Heart left ventricle (tissue), 16 donors: ENCODE measurements at regions of chr9 and their contacts with region 1.

Region 1: DNA sequence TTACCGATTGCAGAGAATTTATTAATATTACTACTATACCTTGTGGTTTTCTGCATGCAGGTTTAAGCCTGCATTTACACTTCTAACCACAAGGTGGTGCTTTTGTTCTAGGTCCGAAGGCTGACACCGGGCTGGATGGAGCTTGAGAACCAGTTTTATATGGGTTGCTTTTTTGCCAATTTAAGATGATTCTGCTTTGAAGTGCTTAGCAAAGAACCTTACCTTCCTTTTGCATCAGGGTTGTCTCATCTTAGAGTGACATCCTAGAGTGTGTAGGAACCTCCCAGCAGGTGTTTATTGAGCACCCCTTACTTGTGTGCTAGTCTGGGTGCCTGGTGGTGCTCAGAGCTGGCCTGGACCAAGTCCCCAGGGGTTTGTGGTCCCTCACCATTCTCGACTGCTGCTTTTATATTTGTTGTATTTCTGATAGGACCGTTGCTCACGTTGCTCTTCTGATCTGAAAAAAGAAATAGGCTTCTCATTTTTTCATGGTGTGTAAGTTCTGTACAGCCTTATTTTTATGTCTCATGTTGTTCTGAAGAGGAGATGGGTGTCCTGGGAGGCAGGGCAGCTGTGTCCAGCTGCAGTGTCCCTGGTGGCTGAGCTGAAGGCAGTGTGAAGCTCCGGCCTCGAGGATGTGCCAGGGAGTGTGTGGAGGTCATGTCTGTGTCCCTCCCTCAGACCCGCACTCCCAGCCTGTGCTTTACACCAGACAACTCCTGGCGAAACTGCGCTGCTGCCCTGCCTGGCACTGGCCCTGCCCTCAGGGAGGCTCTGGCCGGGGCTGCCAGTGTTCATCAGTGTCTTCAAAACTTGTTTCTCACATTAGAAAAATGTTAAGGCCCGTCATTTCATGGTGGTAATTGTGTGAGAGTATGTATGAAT is 54.3 kb downstream of the EHMT1 start:
- DNase-seq: peak in 3 of 5 donors; percentile 40 to 65 (median 47)
- ATAC-seq: peak; percentile 20 to 57 (median 44)
- H3K4me3 ChIP-seq: no peak overlapping the region
- H3K27ac ChIP-seq: peak overlapping the region in 5 of 12 donors; percentile 0 to 33 (median 5)
- H3K4me1 ChIP-seq: peaks cover 0 to 49% (median 32%) of the 10 kb centered on the region in 12 donors
- H3K27me3 ChIP-seq: no peaks in the 10 kb centered on the region
- CTCF ChIP-seq: peak; percentile 76 to 93 (median 88)
- POLR2A ChIP-seq: no peak

Region 2: GRCh38 chr9:137618105-137619067 is 54.8 kb before region 1 on chr9 and contains the start of gene EHMT1:
- intact Hi-C with region 1: loop called in 1 of 10 experiments (anchors 10 kb)
- DNase-seq: peak; percentile 83 to 95 (median 89)
- ATAC-seq: peak; percentile 65 to 86 (median 84)
- H3K4me3 ChIP-seq: peak within 1 kb of the TSS; percentile 77 to 100 (median 90)
- H3K27ac ChIP-seq: peak within 1 kb of the TSS; percentile 88 to 96 (median 92)
- H3K4me1 ChIP-seq: peaks cover 4 to 56% (median 39%) of the 10 kb centered on the region in 12 donors
- H3K27me3 ChIP-seq: no peaks in the 10 kb centered on the region
- CTCF ChIP-seq: peak in 1 of 12 donors; percentile 6
- POLR2A ChIP-seq: peak in 1 of 2 donors; percentile 58
- total RNA-seq, gene EHMT1: 27.8 to 55.9 (median 32.0) TPM

Region 3: GRCh38 chr9:137694967-137695879 is 22.1 kb after region 1 on chr9:
- intact Hi-C with region 1: loop called in 2 of 10 experiments (anchors 1 to 2 kb)
- DNase-seq: peak; percentile 45 to 71 (median 56)
- ATAC-seq: peak; percentile 68 to 89 (median 88)
- H3K4me3 ChIP-seq: no peak overlapping the region
- H3K27ac ChIP-seq: no peak overlapping the region
- H3K4me1 ChIP-seq: peaks cover 0 to 54% (median 36%) of the 10 kb centered on the region in 12 donors
- H3K27me3 ChIP-seq: no peaks in the 10 kb centered on the region
- CTCF ChIP-seq: peak; percentile 57 to 74 (median 67)
- POLR2A ChIP-seq: no peak

Region 4: GRCh38 chr9:137745541-137745991 is 72.4 kb after region 1 on chr9:
- intact Hi-C with region 1: loop called in 1 of 10 experiments (anchors 10 kb)
- DNase-seq: no peak
- ATAC-seq: no peak
- H3K4me3 ChIP-seq: no peak overlapping the region
- H3K27ac ChIP-seq: no peak overlapping the region
- H3K4me1 ChIP-seq: peaks cover 0 to 9% (median 2%) of the 10 kb centered on the region in 12 donors
- H3K27me3 ChIP-seq: no peaks in the 10 kb centered on the region
- CTCF ChIP-seq: no peak
- POLR2A ChIP-seq: no peak

Region 5: GRCh38 chr9:137762414-137763061 is 89.4 kb after region 1 on chr9:
- intact Hi-C with region 1: loop called in 1 of 10 experiments (anchors 10 kb)
- DNase-seq: peak in 1 of 5 donors; percentile 56
- ATAC-seq: peak in 3 of 4 donors; percentile 33 to 63 (median 57)
- H3K4me3 ChIP-seq: no peak overlapping the region
- H3K27ac ChIP-seq: peak overlapping the region in 1 of 12 donors; percentile 23
- H3K4me1 ChIP-seq: peaks cover 0 to 16% (median 0%) of the 10 kb centered on the region in 12 donors
- H3K27me3 ChIP-seq: no peaks in the 10 kb centered on the region
- CTCF ChIP-seq: no peak
- POLR2A ChIP-seq: no peak

Region 6: DNA sequence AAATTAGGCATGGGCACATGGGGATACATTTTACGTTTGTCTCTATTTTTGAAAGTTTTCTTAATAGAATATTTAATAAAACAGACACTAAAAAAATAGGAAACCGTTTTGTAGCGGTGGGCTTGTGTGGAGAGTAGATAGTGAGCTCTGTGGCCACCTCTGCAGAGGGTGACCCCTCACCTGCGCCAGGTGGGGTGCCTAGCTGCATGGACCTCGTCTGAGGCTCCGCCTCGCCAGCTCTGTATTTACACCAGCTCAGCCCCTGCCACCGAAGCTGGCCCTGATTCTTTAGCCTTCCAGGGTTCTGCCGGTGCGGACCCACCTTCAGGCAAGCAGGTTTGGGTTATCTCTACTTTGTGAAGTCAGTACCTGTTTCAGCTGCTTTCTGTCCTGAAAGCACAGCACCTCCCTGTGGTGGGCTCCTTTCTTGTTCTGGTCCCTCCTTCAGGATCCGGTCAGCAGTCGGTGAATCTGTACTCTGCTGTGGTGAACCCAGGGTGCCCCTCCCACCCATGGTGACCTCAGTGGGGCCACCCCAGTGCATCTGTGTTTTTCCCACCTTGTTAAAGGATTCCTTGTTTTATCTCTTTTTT is 99.2 kb after region 1 on chr9:
- intact Hi-C with region 1: loop called in 2 of 10 experiments (anchors 10 kb)
- DNase-seq: no peak
- ATAC-seq: no peak
- H3K4me3 ChIP-seq: no peak overlapping the region
- H3K27ac ChIP-seq: no peak overlapping the region
- H3K4me1 ChIP-seq: no peaks in the 10 kb centered on the region
- H3K27me3 ChIP-seq: no peaks in the 10 kb centered on the region
- CTCF ChIP-seq: no peak
- POLR2A ChIP-seq: no peak

Region 7: DNA sequence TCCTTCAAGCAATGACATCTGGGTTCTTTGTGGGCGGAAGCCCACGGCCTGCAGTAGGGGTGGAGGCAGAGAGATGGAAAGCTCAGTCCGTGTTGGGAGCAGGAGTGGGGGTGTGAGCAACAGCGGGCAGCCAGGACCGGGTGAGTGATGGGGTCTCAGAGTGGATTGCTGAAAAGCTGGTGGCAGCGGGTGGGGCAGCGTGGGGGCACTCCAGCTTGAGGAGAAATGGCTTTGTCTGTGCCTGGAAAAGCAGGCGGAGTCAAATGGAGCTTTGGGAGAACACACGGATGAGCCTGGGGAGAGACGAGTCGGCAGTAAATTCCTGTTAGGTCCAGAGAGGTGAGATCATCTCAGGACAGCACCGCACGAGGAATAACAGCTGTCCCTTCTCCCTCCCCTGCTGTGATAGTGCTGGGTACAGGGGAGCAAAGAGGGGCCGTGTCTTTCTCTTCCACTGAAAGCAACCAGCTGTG is 246.5 kb after region 1 on chr9:
- intact Hi-C with region 1: no loop called
- DNase-seq: no peak
- ATAC-seq: no peak
- H3K4me3 ChIP-seq: no peak overlapping the region
- H3K27ac ChIP-seq: no peak overlapping the region
- H3K4me1 ChIP-seq: peaks cover 0 to 12% (median 5%) of the 10 kb centered on the region in 12 donors
- H3K27me3 ChIP-seq: peaks cover 0 to under 1% (median 0%) of the 10 kb centered on the region in 9 donors
- CTCF ChIP-seq: no peak
- POLR2A ChIP-seq: no peak

Region 8: DNA sequence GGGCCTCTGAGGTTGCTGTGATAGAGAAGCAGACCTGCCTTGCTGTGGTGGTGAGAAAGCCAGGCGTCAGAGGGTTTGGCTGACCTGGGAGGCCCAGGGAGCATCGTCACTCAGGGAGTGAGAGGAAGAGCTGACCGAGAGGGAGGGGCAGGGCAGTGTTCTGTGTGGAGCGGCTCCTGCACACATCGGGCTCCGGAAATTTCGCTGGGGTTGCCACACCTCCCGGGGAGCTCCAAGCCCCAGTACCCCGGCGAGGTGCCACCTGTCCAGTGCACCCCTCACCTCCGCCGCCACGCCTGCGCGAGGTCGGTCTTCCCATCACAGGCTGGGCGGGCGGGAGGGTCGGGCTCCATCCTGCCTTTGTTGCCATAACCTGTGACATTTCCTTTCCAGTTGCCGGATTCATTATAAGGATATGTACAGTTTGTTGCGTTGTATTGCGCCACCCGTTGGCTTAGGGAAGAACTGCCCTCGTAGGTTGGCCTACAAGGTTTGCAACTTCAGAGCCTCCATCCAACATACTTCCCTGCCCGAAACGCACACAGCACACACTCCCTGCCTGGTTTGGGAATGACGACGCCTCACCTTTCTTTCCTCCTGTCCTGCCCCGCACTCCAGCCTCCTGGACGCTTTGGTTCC is 427.7 kb after region 1 on chr9:
- intact Hi-C with region 1: loop called in 2 of 10 experiments (anchors 2 to 10 kb)
- DNase-seq: peak in 1 of 5 donors; percentile 23
- ATAC-seq: peak in 1 of 4 donors; percentile 33
- H3K4me3 ChIP-seq: no peak overlapping the region
- H3K27ac ChIP-seq: no peak overlapping the region
- H3K4me1 ChIP-seq: peaks cover 0 to 3% (median 0%) of the 10 kb centered on the region in 12 donors
- H3K27me3 ChIP-seq: peaks cover 0 to 8% (median 0%) of the 10 kb centered on the region in 9 donors
- CTCF ChIP-seq: peak in 7 of 12 donors; percentile 9 to 42 (median 33)
- POLR2A ChIP-seq: no peak